ENCODE measurements at regions of chr1 and their contacts with region 1.

Region 1: GRCh38 chr1:173824331-173825081 is at the starts of genes CENPL and DARS2:
- DNase-seq: peak; percentile 97
- total RNA-seq, gene CENPL: 3.9 TPM
- total RNA-seq, gene DARS2: 12.5 TPM

Region 2: GRCh38 chr1:173429471-173430402 is 394.8 kb before region 1 on chr1:
- intact Hi-C with region 1: loop called (anchors 1 kb)
- DNase-seq: peak; percentile 93

Region 3: DNA sequence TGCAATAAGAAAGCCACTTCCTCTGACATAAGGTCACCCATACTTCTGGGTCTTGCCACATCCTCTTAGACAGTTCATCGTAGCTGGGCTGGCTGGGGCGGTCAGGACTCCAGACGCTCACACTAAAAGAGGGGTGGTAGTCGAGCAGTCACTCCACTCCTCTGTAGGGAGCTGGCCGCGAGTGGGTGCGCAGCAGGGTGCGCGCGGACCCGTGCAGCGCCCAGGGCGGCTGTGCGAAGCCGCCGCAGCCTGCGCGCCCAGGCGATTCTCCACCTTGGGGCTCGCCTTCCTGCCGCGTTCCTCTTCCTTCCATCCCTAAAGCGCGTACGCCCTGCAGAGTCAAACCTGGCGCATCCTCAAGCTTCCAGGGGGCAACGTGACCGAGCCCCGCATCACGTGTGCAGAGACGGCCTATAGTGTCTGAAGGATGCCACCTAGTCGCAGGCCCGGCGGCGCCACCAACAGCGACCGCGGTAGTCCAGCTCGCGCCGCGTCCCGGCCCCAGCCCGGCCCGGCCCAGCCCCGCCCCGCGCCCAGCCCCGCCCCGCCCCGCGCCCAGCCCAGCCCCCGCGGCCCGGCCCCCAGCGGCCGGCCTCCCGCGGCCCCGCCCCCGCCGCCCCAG is 347.7 kb before region 1 on chr1:
- intact Hi-C with region 1: loop called (anchors 2 kb)
- DNase-seq: peak; percentile 96

Region 4: GRCh38 chr1:173714759-173715537 is 109.6 kb before region 1 on chr1 and contains the start of gene KLHL20:
- intact Hi-C with region 1: loop called (anchors 5 kb)
- DNase-seq: peak; percentile 90
- total RNA-seq, gene KLHL20: 17.1 TPM

Region 5: GRCh38 chr1:173867753-173868265 is 43.3 kb after region 1 on chr1 and contains the start of gene GAS5:
- intact Hi-C with region 1: loop called (anchors 1 kb)
- DNase-seq: peak; percentile 99
- total RNA-seq, gene GAS5: 58.0 TPM